ENCODE measurements at regions of chr4 and their contacts with region 1.

Region 1: DNA sequence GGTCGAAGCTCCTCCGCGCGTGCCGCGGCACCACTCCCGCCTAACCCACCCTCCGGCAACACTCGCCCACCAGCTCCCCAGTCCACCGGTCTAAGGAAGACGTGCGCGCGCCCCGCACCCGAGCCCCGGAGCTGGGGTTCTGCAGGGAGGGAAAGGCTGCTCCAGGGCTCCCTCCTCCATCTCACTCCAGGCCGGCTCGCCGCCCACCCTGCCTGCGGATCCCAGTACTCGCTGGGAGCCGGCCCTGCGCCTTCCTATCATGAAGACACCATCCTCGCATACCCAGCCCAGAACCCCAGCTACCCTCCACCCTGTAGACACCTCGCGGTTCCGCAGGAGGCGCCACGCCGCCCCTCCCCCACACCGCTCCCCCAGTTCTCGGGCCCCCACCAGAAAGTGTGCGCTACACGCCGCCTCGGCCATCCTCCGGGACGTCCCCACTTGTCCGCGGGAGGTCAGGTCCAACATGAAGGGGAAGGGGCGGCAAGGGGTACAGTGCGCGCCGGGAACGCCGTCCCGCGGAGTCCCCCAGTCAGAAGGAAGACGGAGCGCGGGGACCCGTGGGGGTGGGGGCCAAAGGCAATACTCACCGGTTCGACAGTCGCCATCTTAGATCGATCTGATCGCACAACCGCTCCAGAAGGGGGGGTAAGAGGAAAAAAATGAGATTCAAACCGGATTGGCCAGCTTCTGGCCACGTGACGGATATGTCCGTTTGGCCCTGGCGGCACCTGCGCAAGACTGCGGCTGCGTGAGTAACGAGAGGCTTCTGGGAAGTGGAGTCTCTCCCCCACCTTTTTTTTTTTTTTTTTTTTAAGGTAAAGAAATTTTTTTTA is at the start of gene EIF4E:
- DNase-seq: peak; percentile 99
- H3K4me3 ChIP-seq: peak within 1 kb of the TSS; percentile 91 to 95 (median 91)
- H3K27ac ChIP-seq: peak within 1 kb of the TSS; percentile 93
- H3K4me1 ChIP-seq: peaks cover 32% of the 10 kb centered on the region
- H3K27me3 ChIP-seq: no peaks in the 10 kb centered on the region
- CTCF ChIP-seq: peak in 1 of 2 donors; percentile 26
- POLR2A ChIP-seq: peak; percentile 81
- total RNA-seq, gene EIF4E: 103 and 107 TPM in 2 replicates

Region 2: DNA sequence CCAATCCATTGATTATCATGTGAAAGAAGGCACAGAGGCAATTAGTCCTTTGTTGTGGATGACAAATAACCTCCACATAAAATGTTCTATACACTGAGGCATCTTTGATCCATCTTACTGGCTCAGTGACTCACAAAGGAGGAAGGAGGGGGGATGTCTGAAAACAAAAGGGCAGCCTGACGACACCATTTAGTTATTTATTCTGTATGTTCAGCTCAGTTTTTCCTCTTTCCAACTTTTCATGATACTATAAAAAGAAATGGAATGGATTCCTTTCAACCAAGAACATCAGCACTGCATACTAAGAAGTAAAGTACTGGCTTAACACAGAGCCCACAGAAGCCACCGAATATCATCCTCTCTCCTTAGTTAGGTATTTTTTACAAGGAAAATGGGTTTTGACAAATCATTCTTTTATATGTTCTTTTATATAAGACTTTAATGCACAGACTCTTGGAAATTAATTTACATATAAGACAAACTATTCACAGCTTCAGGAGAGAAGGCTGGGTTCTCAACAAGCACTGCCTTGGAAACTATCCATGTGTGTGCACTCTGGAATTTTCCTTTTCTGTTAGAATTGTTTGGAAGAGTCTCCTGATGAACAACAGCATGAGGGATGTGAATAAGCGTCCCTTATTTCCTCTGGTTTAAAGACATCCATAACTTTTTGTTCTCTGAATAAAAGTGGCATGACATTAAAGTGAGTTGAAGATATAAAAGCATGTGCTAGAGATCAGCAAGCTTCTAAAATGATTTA is 405.9 kb before region 1 on chr4:
- CTCF ChIA-PET with region 1: interaction called, 3 read pairs
- POLR2A ChIA-PET with region 1: no interaction called
- dilution Hi-C with region 1: no loop called
- intact Hi-C with region 1: loop called (anchors 5 kb)
- DNase-seq: peak; percentile 91
- H3K4me3 ChIP-seq: peak overlapping the region in 1 of 3 experiments; percentile 45
- H3K27ac ChIP-seq: peak overlapping the region; percentile 97
- H3K4me1 ChIP-seq: peaks cover 52% of the 10 kb centered on the region
- H3K27me3 ChIP-seq: no peaks in the 10 kb centered on the region
- CTCF ChIP-seq: no peak
- POLR2A ChIP-seq: no peak

Region 3: GRCh38 chr4:98728433-98728832 is 200.3 kb before region 1 on chr4:
- CTCF ChIA-PET with region 1: interaction called, 8 read pairs
- POLR2A ChIA-PET with region 1: interaction called, 3 read pairs
- dilution Hi-C with region 1: no loop called
- intact Hi-C with region 1: loop called (anchors 2 kb)
- DNase-seq: peak; percentile 96
- H3K4me3 ChIP-seq: peak overlapping the region in 1 of 3 experiments; percentile 7
- H3K27ac ChIP-seq: peak overlapping the region; percentile 72
- H3K4me1 ChIP-seq: peaks cover 18% of the 10 kb centered on the region
- H3K27me3 ChIP-seq: no peaks in the 10 kb centered on the region
- CTCF ChIP-seq: peak in 1 of 2 donors; percentile 0
- POLR2A ChIP-seq: no peak

Region 4: GRCh38 chr4:99054428-99054994 is 125.8 kb after region 1 on chr4:
- CTCF ChIA-PET with region 1: interaction called, 13 read pairs
- POLR2A ChIA-PET with region 1: no interaction called
- dilution Hi-C with region 1: no loop called
- intact Hi-C with region 1: no loop called
- DNase-seq: no peak
- H3K4me3 ChIP-seq: no peak overlapping the region
- H3K27ac ChIP-seq: no peak overlapping the region
- H3K4me1 ChIP-seq: peaks cover 8% of the 10 kb centered on the region
- H3K27me3 ChIP-seq: no peaks in the 10 kb centered on the region
- CTCF ChIP-seq: no peak
- POLR2A ChIP-seq: no peak

Measured in endothelial cell of umbilical vein (primary cell).